Vagina (tissue), 2 donors: ENCODE measurements at regions of chr17 and their contacts with region 1.

Region 1: GRCh38 chr17:45021607-45022287 is 29.7 kb downstream of the DCAKD start:
- DNase-seq: no peak
- H3K4me3 ChIP-seq: peak overlapping the region; percentile 29 to 46
- H3K27ac ChIP-seq: peak overlapping the region; percentile 86
- H3K4me1 ChIP-seq: peaks cover 50% of the 10 kb centered on the region
- H3K27me3 ChIP-seq: no peaks in the 10 kb centered on the region
- CTCF ChIP-seq: peak; percentile 52 to 97 (median 75)
- POLR2A ChIP-seq: no peak

Region 2: GRCh38 chr17:44968226-44969143 is 53.3 kb before region 1 on chr17 and contains the start of gene C1QL1:
- intact Hi-C with region 1: loop called (anchors 5 kb)
- DNase-seq: no peak
- H3K4me3 ChIP-seq: peak within 1 kb of the TSS; percentile 48
- H3K27ac ChIP-seq: no peak within 1 kb of the TSS
- H3K4me1 ChIP-seq: peaks cover 35% of the 10 kb centered on the region
- H3K27me3 ChIP-seq: no peaks in the 10 kb centered on the region
- CTCF ChIP-seq: no peak
- POLR2A ChIP-seq: no peak
- total RNA-seq, gene C1QL1: 6.9 TPM